ENCODE measurements at regions of chr9 and their contacts with region 1.

Region 1: DNA sequence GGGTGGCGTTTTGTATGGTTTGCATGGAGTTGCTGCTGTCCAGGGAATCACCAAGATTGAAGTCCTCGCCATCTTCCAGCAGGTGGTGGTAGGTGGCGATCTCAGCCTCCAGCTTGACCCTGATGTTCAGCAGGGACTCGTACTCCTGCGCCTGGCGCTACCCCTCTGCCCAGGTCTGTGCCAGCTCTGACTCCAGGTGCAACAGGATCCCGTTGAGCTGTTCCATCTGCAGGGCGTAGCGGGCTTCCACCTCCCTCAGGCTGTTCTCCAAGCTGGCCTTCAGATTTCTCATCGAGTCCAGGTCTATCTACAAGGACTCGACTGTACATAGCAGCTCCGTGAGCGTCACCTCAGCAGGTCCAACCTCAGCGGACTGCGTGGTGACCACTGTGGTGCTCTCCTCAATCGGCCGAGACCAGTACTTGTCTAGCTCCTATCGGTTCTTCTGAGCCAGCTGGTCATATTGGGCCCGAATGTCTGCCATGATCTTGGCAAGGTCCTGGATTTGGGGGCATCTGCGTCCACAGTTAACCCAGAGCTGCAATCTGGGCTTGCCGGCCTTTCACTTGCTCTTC is 1584.8 kb upstream of the ACO1 start:
- DNase-seq: no peak
- H3K4me3 ChIP-seq: no peak overlapping the region
- H3K27ac ChIP-seq: no peak overlapping the region
- H3K4me1 ChIP-seq: no peaks in the 10 kb centered on the region
- CTCF ChIP-seq: no peak

Region 2: DNA sequence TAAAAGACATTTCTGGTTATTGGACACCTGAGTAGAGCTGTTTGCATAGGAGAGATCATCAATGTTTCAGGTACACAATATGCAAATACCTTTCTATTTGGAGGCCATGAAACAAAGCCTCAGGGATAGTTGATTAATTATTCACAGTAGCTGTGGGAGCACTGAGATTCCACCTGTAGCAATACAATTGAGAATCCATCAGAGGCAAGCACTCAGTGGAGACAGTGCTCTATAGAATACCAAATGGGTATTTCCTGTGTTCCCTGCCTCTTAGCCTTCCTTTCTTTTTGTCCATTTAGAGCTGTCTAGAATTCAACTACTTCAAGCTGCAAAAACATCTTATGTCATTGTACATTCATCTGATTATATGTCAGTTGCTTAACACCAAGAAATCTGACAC is 169.2 kb before region 1 on chr9:
- CTCF ChIA-PET with region 1: no interaction called
- POLR2A ChIA-PET with region 1: no interaction called
- intact Hi-C with region 1: loop called (anchors 10 kb)
- DNase-seq: no peak
- H3K4me3 ChIP-seq: no peak overlapping the region
- H3K27ac ChIP-seq: no peak overlapping the region
- H3K4me1 ChIP-seq: no peaks in the 10 kb centered on the region
- CTCF ChIP-seq: no peak

Region 3: DNA sequence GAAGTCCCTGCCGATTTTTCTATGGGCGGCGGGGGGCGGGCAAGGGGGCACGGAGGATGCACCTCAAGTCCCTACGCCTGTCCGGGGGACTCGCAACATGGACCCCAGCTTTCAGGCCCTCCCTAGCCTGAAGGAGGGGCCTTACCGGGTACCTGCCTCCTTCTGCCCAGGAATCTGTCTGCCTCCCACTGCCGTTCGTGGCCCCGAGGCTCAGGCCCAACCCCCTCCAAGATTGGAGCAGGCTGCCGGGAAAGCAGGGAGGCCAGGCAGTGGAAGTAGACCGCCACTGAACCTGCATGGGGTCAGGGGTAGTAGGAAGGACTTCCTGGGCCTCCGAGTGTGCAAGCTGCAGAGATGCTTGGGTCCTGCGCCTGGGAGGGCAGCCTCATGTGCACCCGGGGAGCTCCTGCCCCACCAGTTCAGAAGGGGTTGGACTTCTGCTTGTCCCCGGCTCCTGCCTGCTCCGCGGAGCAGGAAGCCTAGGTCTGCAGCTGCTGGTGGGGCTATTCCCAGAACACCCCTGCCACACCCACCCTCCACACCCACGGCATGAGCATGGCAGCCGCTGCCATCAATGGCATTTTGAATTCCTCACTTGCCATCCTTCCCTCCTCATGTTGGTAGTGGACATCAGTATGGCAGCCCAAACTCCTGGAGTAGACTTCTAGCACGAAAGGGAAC is 272.1 kb after region 1 on chr9:
- CTCF ChIA-PET with region 1: no interaction called
- POLR2A ChIA-PET with region 1: no interaction called
- intact Hi-C with region 1: no loop called
- DNase-seq: no peak
- H3K4me3 ChIP-seq: no peak overlapping the region
- H3K27ac ChIP-seq: no peak overlapping the region
- H3K4me1 ChIP-seq: no peaks in the 10 kb centered on the region
- CTCF ChIP-seq: no peak